GM12878 (cell line): ENCODE measurements at regions of chr20 and their contacts with region 1.

Region 1: DNA sequence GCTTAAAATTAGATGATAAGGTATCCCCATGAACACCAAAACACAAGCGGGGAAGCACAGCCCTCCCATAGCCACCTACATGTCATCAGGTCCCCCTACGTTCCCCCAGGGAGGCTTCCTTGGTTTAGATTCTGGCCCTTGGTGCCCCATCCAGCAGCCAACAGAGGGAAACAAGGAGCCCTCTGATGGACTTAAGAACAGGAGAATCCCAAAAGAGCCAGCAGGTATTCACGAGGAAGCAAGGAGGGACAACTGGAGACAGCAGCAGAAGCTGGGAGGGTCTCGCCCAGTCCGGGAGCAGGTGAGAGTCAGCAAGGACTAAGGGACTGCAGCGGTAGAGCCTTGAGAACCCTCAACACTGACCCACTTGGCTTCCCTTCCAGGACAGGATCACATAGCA is 58.4 kb upstream of the TOP1 start:
- DNase-seq: no peak
- ATAC-seq: no peak
- H3K4me3 ChIP-seq: no peak overlapping the region
- H3K27ac ChIP-seq: no peak overlapping the region
- H3K4me1 ChIP-seq: no peaks in the 10 kb centered on the region
- H3K27me3 ChIP-seq: no peaks in the 10 kb centered on the region
- CTCF ChIP-seq: no peak
- EP300 ChIP-seq: no peak
- POLR2A ChIP-seq: no peak
- RAD21 ChIP-seq: no peak

Region 2: DNA sequence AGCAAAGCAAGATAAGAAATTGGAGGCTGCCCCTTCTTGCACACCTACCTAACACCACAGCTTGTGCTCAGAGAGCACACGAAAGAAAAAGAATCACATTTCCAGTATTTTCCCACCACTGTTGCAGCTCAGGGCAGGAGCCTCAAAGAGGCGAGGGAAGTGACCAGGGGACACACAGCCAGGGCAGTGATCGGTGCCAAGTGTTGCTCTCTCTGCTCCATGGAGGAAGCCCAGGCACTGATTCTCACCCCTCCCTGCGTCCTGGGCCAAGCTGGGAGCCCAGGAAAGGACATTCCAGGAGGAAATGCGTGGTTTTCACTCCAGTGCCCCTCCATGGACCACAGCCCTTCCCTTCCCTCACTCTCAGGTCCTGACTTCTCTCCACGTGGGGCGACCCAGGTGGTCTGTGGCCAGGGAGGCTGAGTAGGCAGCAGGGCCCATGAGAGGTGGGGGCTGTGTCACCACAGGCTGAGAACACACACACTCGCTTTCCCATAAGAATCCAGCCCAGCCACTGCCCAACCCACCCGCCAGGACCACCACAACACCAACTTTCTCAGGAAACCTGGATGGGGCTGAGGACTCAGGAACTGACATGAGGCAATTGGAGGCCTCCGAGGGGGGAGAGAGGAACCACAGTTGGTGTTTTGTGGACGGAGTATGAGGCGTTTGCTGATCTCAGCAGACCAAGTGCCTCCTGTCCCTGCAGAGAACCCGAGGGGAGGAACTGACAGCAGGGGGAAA is 199.5 kb before region 1 on chr20:
- CTCF ChIA-PET with region 1: no interaction called
- POLR2A ChIA-PET with region 1: no interaction called
- RAD21 ChIA-PET with region 1: no interaction called
- SMC1A ChIA-PET with region 1: no interaction called
- in situ Hi-C with region 1: no loop called
- intact Hi-C with region 1: no loop called
- DNase-seq: no peak
- ATAC-seq: no peak
- H3K4me3 ChIP-seq: no peak overlapping the region
- H3K27ac ChIP-seq: no peak overlapping the region
- H3K4me1 ChIP-seq: no peaks in the 10 kb centered on the region
- H3K27me3 ChIP-seq: peaks cover 0 to 7% of the 10 kb centered on the region in 2 experiments; a peak in 2 of 4 replicates
- CTCF ChIP-seq: no peak
- EP300 ChIP-seq: no peak
- POLR2A ChIP-seq: no peak
- RAD21 ChIP-seq: no peak

Region 3: GRCh38 chr20:40811660-40812414 is 158.4 kb before region 1 on chr20:
- CTCF ChIA-PET with region 1: no interaction called
- POLR2A ChIA-PET with region 1: no interaction called
- RAD21 ChIA-PET with region 1: no interaction called
- SMC1A ChIA-PET with region 1: no interaction called
- in situ Hi-C with region 1: no loop called
- intact Hi-C with region 1: no loop called
- DNase-seq: no peak
- ATAC-seq: no peak
- H3K4me3 ChIP-seq: no peak overlapping the region
- H3K27ac ChIP-seq: no peak overlapping the region
- H3K4me1 ChIP-seq: no peaks in the 10 kb centered on the region
- H3K27me3 ChIP-seq: peaks cover 0 to 3% of the 10 kb centered on the region in 2 experiments; a peak in 1 of 4 replicates
- CTCF ChIP-seq: 0 out of 6 replicates have a peak, but pooled peaks of 2 of the 3 experiments have one; percentile 1 to 18
- EP300 ChIP-seq: no peak
- POLR2A ChIP-seq: no peak
- RAD21 ChIP-seq: no peak

Region 4: DNA sequence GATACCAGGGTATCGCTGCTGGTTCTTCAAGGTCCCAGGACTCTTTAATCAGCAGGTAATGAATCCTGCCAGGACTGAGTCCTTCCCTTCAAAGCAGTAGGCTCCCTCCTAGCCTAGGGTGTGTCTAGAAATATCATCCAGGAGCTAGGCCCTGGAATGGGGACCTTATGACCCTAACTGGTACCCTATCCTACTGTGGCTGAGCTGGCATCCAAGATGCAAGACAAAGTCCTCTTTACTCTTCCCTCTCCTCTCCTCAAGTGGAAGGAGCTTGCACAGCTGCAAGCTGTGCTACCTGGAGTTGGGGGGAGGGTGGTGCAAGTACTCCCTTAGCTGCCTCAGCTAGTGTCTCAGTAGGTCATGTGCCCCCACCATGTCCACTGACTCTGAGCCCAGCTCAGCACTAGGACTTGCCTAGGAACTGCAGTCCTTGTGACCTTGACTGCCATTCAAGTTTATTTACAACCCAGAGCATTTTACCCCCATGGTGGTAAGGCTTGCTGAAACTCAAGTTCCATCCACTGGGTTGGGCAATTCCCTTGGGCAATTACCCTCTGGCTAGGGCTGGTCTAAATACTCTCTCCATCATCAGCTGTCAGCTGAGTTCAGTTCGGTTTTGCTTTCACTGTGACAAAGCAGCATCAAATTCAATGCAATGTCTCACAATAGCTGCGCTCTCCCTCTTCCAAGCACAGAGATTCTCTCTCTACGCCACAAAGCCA is 10.1 kb after region 1 on chr20:
- CTCF ChIA-PET with region 1: interaction called, 69 read pairs
- POLR2A ChIA-PET with region 1: interaction called, 4 read pairs
- RAD21 ChIA-PET with region 1: interaction called, 39 read pairs
- SMC1A ChIA-PET with region 1: interaction called, 52 read pairs
- in situ Hi-C with region 1: no loop called
- intact Hi-C with region 1: no loop called
- DNase-seq: peak; percentile 83
- ATAC-seq: peak; percentile 86
- H3K4me3 ChIP-seq: peak overlapping the region; percentile 20; the same call in 1 of the 2 replicates
- H3K27ac ChIP-seq: peak overlapping the region; percentile 75
- H3K4me1 ChIP-seq: peaks cover 32% of the 10 kb centered on the region
- H3K27me3 ChIP-seq: no peaks in the 10 kb centered on the region
- CTCF ChIP-seq: no peak
- EP300 ChIP-seq: peak; percentile 6 to 48; a peak in 2 of 4 replicates
- POLR2A ChIP-seq: 0 out of 2 replicates have a peak, but pooled peaks have one; percentile 39
- RAD21 ChIP-seq: 0 out of 2 replicates have a peak, but pooled peaks have one; percentile 23

Region 5: DNA sequence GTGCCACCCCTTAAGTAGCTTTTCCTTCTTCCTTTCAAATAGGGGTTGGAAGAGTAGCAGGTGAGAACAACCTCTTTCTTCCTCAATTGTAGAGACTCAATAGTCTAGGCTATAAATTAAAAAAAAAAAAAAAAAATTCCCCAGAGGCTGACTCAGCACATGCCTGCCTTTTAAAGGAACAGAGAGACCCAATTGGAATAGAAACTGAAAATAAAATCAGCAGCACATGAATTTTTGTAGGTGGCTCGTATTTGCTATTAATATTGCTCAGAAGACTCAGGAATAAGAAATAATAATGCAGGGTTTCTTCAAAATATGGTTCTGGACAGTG is 77.7 kb after region 1 on chr20:
- CTCF ChIA-PET with region 1: interaction called, 13 read pairs
- POLR2A ChIA-PET with region 1: interaction called, 5 read pairs
- RAD21 ChIA-PET with region 1: interaction called, 6 read pairs
- SMC1A ChIA-PET with region 1: interaction called, 8 read pairs
- in situ Hi-C with region 1: no loop called
- intact Hi-C with region 1: no loop called
- DNase-seq: no peak
- ATAC-seq: peak; percentile 69
- H3K4me3 ChIP-seq: peak overlapping the region; percentile 64
- H3K27ac ChIP-seq: peak overlapping the region; percentile 76
- H3K4me1 ChIP-seq: peaks cover 44% of the 10 kb centered on the region
- H3K27me3 ChIP-seq: no peaks in the 10 kb centered on the region
- CTCF ChIP-seq: no peak
- EP300 ChIP-seq: no peak
- POLR2A ChIP-seq: no peak
- RAD21 ChIP-seq: no peak

Region 6: GRCh38 chr20:41072190-41072863 is 102.1 kb after region 1 on chr20:
- CTCF ChIA-PET with region 1: interaction called, 8 read pairs
- POLR2A ChIA-PET with region 1: no interaction called
- RAD21 ChIA-PET with region 1: interaction called, 4 read pairs
- SMC1A ChIA-PET with region 1: interaction called, 16 read pairs
- in situ Hi-C with region 1: no loop called
- intact Hi-C with region 1: no loop called
- DNase-seq: no peak
- ATAC-seq: peak; percentile 18; the same call in 2 of the 3 replicates
- H3K4me3 ChIP-seq: no peak overlapping the region
- H3K27ac ChIP-seq: peak overlapping the region; percentile 9; the same call in 1 of the 2 replicates
- H3K4me1 ChIP-seq: peaks cover 15% of the 10 kb centered on the region
- H3K27me3 ChIP-seq: no peaks in the 10 kb centered on the region
- CTCF ChIP-seq: no peak
- EP300 ChIP-seq: no peak
- POLR2A ChIP-seq: no peak
- RAD21 ChIP-seq: no peak

Region 7: GRCh38 chr20:41173161-41173721 is 203.0 kb after region 1 on chr20:
- CTCF ChIA-PET with region 1: interaction called, 3 read pairs
- POLR2A ChIA-PET with region 1: interaction called, 3 read pairs
- RAD21 ChIA-PET with region 1: interaction called, 4 read pairs
- SMC1A ChIA-PET with region 1: no interaction called
- in situ Hi-C with region 1: no loop called
- intact Hi-C with region 1: loop called (anchors 2 kb)
- DNase-seq: no peak
- ATAC-seq: peak; percentile 97
- H3K4me3 ChIP-seq: no peak overlapping the region
- H3K27ac ChIP-seq: no peak overlapping the region
- H3K4me1 ChIP-seq: no peaks in the 10 kb centered on the region
- H3K27me3 ChIP-seq: no peaks in the 10 kb centered on the region
- CTCF ChIP-seq: peak; percentile 87 to 94 (median 92)
- EP300 ChIP-seq: no peak
- POLR2A ChIP-seq: no peak
- RAD21 ChIP-seq: peak; percentile 90

Region 8: GRCh38 chr20:41232973-41233926 is 263.0 kb after region 1 on chr20:
- CTCF ChIA-PET with region 1: interaction called, 40 read pairs
- POLR2A ChIA-PET with region 1: no interaction called
- RAD21 ChIA-PET with region 1: interaction called, 16 read pairs
- SMC1A ChIA-PET with region 1: interaction called, 13 read pairs
- in situ Hi-C with region 1: loop called (anchors 10 kb)
- intact Hi-C with region 1: loop called (anchors 2 kb)
- DNase-seq: no peak
- ATAC-seq: no peak
- H3K4me3 ChIP-seq: no peak overlapping the region
- H3K27ac ChIP-seq: no peak overlapping the region
- H3K4me1 ChIP-seq: no peaks in the 10 kb centered on the region
- H3K27me3 ChIP-seq: no peaks in the 10 kb centered on the region
- CTCF ChIP-seq: no peak
- EP300 ChIP-seq: no peak
- POLR2A ChIP-seq: no peak
- RAD21 ChIP-seq: no peak